Activated CD8-positive, alpha-beta T cell treated with anti-CD3 and anti-CD28 coated beads, Interleukin-2, amount 10 ng/mL, durations not matched to agents 7 days and 5 days (primary cell): ENCODE measurements at regions of chr2 and their contacts with region 1.

Region 1: DNA sequence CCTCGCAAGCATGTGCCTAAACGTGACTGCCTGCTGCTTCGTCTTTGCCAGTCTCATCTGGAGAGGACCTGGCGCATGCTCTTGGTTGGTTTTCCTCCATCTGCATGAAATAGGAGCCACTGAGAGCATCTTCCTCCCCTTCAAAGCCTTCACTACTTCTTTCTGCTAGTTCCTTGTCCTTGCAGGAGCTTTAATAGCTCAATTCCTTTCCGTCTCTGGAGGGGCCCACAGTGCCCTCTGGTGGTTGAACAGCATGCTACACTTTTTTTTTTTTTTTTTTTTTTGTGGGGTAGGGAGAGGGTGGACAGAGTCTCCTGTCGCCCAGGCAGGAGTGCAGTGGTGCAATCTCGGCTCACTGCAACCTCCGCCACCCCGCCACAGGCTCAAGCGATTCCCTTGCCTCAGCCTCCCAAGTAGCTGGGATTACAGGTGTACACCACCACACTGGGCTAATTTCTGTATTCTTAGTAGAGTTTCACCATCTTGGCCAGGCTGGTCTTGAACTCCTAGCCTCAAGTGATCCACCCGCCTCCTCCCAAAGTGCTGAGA is 59.6 kb downstream of the SP110 start:
- DNase-seq: peak; percentile 64
- ATAC-seq: peak; percentile 60
- H3K4me3 Mint-ChIP-seq: no peak overlapping the region
- H3K27ac Mint-ChIP-seq: no peak overlapping the region
- H3K4me1 Mint-ChIP-seq: peaks cover 13% of the 10 kb centered on the region
- H3K27me3 Mint-ChIP-seq: no peaks in the 10 kb centered on the region

Region 2: DNA sequence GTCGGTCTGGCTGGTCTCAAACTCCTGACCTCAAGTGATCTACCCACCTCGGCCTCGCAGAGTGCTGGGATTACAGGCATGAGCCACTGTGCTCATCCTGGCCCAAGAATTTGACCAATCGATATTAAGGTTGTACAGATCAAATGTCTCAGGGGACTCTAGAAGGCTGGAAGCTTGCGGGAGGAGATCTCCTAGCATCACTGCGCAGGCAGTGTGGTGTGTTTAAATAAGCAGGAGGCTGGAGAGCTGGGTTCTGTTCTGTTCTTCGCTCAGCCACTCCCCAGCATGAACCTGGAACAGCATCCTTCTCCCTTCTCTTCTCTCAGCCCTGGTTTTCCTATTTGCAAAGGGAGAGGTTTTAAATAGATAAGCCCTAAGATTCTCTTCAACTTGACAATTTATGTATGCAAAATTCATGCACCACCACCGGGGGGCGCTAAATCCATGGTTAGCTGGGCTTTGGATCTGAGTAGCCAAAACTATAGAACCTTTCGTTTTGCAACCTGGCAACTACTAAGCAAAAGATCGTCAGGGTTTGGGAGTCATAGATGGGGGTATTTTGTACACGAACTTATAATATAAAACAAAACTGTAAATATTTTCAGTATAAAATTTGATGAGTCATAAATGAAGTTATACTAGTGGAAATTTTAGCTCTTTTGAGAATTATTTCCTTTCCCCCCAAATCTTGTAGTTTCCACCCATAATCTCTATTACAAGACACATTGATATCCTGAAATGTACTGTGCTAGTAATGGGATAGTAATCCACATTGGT is 152.1 kb before region 1 on chr2:
- CTCF ChIA-PET with region 1: interaction called, 34 read pairs
- POLR2A ChIA-PET with region 1: no interaction called
- DNase-seq: peak; percentile 88
- ATAC-seq: peak; percentile 76
- H3K4me3 Mint-ChIP-seq: no peak overlapping the region
- H3K27ac Mint-ChIP-seq: no peak overlapping the region
- H3K4me1 Mint-ChIP-seq: peaks cover 7% of the 10 kb centered on the region
- H3K27me3 Mint-ChIP-seq: no peaks in the 10 kb centered on the region

Region 3: DNA sequence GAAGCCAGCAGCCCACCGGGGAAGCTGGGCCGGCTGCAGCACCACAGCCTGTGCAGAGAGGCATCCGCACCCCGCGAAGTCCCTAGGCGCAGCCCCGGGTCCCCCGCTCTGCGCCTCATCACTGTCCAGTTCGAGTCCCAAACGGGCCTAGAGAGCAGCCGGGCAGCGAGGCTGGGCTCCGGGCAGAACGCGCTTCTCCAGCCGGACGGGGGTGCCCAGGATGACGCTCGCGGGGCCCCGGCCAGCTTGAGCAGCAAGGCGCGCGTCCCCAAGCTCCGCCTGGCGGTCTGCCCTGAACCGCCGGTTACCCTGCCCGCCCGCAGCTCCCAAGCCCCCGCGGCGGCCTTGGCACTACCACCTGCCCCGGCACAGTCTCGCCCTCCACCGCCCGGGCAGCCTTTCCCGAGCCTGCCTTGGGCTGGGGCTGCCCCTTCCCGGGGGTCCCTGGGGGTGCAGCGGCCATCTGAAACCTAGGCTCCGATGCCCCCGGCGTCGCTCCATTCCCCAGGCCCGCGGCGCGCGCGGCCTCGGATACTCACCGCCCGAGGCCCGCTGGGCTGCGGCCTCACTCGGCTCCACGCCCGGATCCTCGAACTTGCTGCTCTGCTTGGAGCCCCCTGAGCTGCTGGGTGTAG is 92.1 kb before region 1 on chr2:
- CTCF ChIA-PET with region 1: interaction called, 76 read pairs
- POLR2A ChIA-PET with region 1: interaction called, 3 read pairs
- DNase-seq: peak; percentile 51
- ATAC-seq: peak; percentile 64
- H3K4me3 Mint-ChIP-seq: peak overlapping the region; percentile 66
- H3K27ac Mint-ChIP-seq: peak overlapping the region; percentile 61
- H3K4me1 Mint-ChIP-seq: peaks cover 21% of the 10 kb centered on the region
- H3K27me3 Mint-ChIP-seq: peaks cover 27% of the 10 kb centered on the region

Region 4: DNA sequence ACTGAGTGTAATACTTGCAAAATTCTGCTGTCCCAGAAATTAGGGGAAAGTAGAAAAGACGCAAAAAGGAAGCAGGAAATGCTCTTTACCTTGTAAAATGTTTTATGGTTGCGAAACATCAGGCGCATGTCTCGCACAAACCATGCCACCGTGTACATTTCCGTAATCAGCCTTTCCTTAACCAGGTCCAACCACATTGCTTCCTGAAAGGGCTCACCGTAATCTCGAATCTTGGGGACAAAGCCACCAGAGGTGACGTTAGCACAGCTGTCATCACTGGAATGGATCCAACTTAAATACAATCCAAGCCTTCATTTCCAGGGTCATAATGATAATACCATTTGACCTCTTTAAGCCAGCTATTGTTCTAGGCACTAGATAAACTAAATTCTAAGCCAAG is 10.3 kb after region 1 on chr2:
- CTCF ChIA-PET with region 1: interaction called, 23 read pairs
- POLR2A ChIA-PET with region 1: no interaction called
- DNase-seq: no peak
- ATAC-seq: peak; percentile 60
- H3K4me3 Mint-ChIP-seq: peak overlapping the region; percentile 48
- H3K27ac Mint-ChIP-seq: peak overlapping the region; percentile 80
- H3K4me1 Mint-ChIP-seq: peaks cover 18% of the 10 kb centered on the region
- H3K27me3 Mint-ChIP-seq: no peaks in the 10 kb centered on the region